PC-9 (cell line): ENCODE measurements at regions of chr13 and their contacts with region 1.

Region 1: GRCh38 chr13:109172136-109172535 is 542.7 kb downstream of the MYO16 start:
- DNase-seq: no peak
- H3K4me3 ChIP-seq: no peak overlapping the region
- H3K27ac ChIP-seq: no peak overlapping the region
- H3K4me1 ChIP-seq: no peaks in the 10 kb centered on the region; the same call in 1 of the 2 replicates
- H3K27me3 ChIP-seq: no peaks in the 10 kb centered on the region
- CTCF ChIP-seq: no peak

Region 2: GRCh38 chr13:109243311-109243951 is 71.3 kb after region 1 on chr13:
- CTCF ChIA-PET with region 1: no interaction called
- POLR2A ChIA-PET with region 1: no interaction called
- intact Hi-C with region 1: no loop called
- DNase-seq: peak; percentile 75 to 96
- H3K4me3 ChIP-seq: peak overlapping the region; percentile 22; the same call in 1 of the 2 replicates
- H3K27ac ChIP-seq: peak overlapping the region; percentile 92
- H3K4me1 ChIP-seq: peaks cover 39% of the 10 kb centered on the region
- H3K27me3 ChIP-seq: no peaks in the 10 kb centered on the region
- CTCF ChIP-seq: no peak

Region 3: GRCh38 chr13:110404321-110404720 is 1232.2 kb after region 1 on chr13:
- CTCF ChIA-PET with region 1: no interaction called
- POLR2A ChIA-PET with region 1: interaction called, 12 read pairs
- intact Hi-C with region 1: no loop called
- DNase-seq: no peak
- H3K4me3 ChIP-seq: no peak overlapping the region
- H3K27ac ChIP-seq: no peak overlapping the region
- H3K4me1 ChIP-seq: peaks cover 9% of the 10 kb centered on the region; the same call in 1 of the 2 replicates
- H3K27me3 ChIP-seq: no peaks in the 10 kb centered on the region
- CTCF ChIP-seq: no peak